Transverse colon (tissue), 4 donors: ENCODE measurements at regions of chr3 and their contacts with region 1.

Region 1: DNA sequence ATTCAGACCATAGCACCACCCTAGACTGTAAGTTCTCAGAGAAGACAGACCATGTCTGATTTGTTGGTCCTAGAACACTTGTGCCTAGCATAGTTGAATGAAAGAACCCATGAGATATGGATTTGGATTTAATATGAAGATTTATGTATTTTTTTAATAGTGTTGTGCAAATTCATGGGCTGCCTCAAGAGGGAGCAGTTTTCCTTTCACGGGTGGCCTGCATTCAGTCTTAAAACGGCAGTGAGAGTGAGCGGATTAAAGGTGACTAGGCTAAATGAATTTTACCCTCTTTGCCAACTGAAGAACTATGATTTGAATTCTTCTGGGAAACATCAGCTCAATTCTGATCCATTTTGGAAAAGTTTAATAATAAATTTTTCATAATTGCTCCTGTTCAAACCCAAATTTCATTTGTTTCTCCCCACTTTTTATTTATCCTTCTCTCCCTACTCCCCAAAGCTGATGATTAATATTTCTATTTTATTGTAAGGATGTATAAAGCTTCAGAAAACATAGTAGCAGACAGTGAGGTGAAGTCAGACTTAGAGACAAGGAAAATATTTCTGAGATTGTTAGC is 67.3 kb downstream of the MORC1 start:
- DNase-seq: peak; percentile 26
- H3K4me3 ChIP-seq: no peak overlapping the region
- H3K27ac ChIP-seq: no peak overlapping the region
- H3K4me1 ChIP-seq: no peaks in the 10 kb centered on the region
- H3K27me3 ChIP-seq: no peaks in the 10 kb centered on the region
- CTCF ChIP-seq: peak; percentile 47 to 63 (median 58)
- EP300 ChIP-seq: no peak
- POLR2A ChIP-seq: no peak

Region 2: DNA sequence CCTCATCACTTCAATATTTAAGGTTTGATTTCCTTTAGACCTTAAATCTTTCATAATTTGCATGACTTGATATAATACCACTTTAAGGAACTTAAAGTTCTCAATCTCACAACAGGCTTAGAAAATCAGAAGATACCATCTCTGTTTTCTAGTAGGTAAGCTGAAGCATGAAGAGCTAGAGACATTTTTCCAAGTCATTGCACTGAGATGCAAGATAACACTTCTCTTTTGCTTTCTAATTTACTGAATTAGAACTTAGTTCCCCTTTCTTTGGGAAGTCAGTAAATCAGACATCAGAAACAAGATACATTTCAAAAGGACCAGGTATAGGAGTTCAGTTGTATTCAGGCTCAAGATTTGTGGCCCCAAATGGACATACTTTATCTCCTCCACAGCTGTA is 381.5 kb before region 1 on chr3:
- in situ Hi-C with region 1: no loop called
- intact Hi-C with region 1: no loop called
- DNase-seq: no peak
- H3K4me3 ChIP-seq: no peak overlapping the region
- H3K27ac ChIP-seq: no peak overlapping the region
- H3K4me1 ChIP-seq: no peaks in the 10 kb centered on the region
- H3K27me3 ChIP-seq: no peaks in the 10 kb centered on the region
- CTCF ChIP-seq: no peak
- EP300 ChIP-seq: no peak
- POLR2A ChIP-seq: no peak

Region 3: GRCh38 chr3:109234300-109234699 is 183.6 kb after region 1 on chr3:
- in situ Hi-C with region 1: loop called in 1 of 4 experiments (anchors 25 kb)
- intact Hi-C with region 1: no loop called
- DNase-seq: no peak
- H3K4me3 ChIP-seq: no peak overlapping the region
- H3K27ac ChIP-seq: no peak overlapping the region
- H3K4me1 ChIP-seq: no peaks in the 10 kb centered on the region
- H3K27me3 ChIP-seq: no peaks in the 10 kb centered on the region
- CTCF ChIP-seq: no peak
- EP300 ChIP-seq: no peak
- POLR2A ChIP-seq: no peak